ENCODE measurements at regions of chr16 and their contacts with region 1.

Region 1: DNA sequence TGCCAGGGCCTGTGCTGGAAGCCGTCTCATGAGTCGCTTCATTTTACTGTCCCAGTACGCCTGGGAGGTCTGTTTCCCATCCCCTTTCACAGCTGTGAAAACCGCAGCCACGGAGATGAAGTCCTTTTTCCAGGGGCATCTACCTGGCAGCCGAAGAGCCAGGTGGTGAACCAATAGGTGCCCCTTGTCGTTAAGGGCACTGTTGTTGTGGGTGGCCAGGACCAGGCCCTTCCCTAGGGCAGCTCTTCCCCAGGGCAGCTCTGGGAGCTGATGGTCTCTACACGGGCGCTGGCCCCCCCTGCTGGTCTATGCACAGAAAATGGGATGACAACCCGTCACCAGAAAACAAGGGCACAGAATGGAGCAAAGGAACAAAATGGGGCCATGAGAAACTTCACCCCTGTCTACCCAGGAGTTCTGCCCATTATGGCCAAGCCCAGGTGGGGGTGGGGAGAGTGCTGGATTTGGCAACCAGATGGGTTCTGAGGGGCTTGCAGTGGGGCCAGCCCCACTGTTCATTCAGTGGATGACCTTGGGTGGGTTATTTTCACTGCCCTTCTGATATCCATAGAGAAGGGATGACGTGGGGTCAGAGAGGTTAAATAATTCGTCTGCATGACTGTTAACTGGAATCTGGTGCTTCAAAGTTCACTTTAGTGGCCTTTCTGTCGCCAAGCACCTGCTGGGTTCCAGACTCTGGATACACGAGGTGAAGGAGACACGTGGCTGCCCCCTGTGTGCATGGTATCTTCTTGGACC is 11.5 kb downstream of the RMI2 start:
- DNase-seq: peak; percentile 79
- ATAC-seq: no peak
- H3K4me3 Mint-ChIP-seq: peak overlapping the region; percentile 46
- H3K27ac Mint-ChIP-seq: peak overlapping the region; percentile 23
- H3K4me1 Mint-ChIP-seq: peaks cover 67% of the 10 kb centered on the region
- H3K27me3 Mint-ChIP-seq: peaks cover 7% of the 10 kb centered on the region

Region 2: GRCh38 chr16:10957771-10958486 is 398.8 kb before region 1 on chr16:
- CTCF ChIA-PET with region 1: interaction called, 18 read pairs
- POLR2A ChIA-PET with region 1: no interaction called
- intact Hi-C with region 1: loop called in 1 of 2 experiments (anchors 2 kb)
- DNase-seq: peak; percentile 51
- ATAC-seq: peak; percentile 82
- H3K4me3 Mint-ChIP-seq: no peak overlapping the region
- H3K27ac Mint-ChIP-seq: peak overlapping the region; percentile 88
- H3K4me1 Mint-ChIP-seq: peaks cover 68% of the 10 kb centered on the region
- H3K27me3 Mint-ChIP-seq: no peaks in the 10 kb centered on the region

Region 3: GRCh38 chr16:11232852-11233726 is 123.7 kb before region 1 on chr16:
- CTCF ChIA-PET with region 1: no interaction called
- POLR2A ChIA-PET with region 1: no interaction called
- intact Hi-C with region 1: loop called in 1 of 2 experiments (anchors 1 kb)
- DNase-seq: peak; percentile 96
- ATAC-seq: peak; percentile 82
- H3K4me3 Mint-ChIP-seq: peak overlapping the region; percentile 60
- H3K27ac Mint-ChIP-seq: peak overlapping the region; percentile 97
- H3K4me1 Mint-ChIP-seq: peaks cover 80% of the 10 kb centered on the region
- H3K27me3 Mint-ChIP-seq: no peaks in the 10 kb centered on the region

Region 4: GRCh38 chr16:11297492-11298142 is 59.1 kb before region 1 on chr16:
- CTCF ChIA-PET with region 1: interaction called, 5 read pairs
- POLR2A ChIA-PET with region 1: interaction called, 4 read pairs
- intact Hi-C with region 1: loop called in 1 of 2 experiments (anchors 5 kb)
- DNase-seq: peak; percentile 84
- ATAC-seq: peak; percentile 81
- H3K4me3 Mint-ChIP-seq: peak overlapping the region; percentile 59
- H3K27ac Mint-ChIP-seq: peak overlapping the region; percentile 78
- H3K4me1 Mint-ChIP-seq: peaks cover 28% of the 10 kb centered on the region
- H3K27me3 Mint-ChIP-seq: no peaks in the 10 kb centered on the region

Region 5: DNA sequence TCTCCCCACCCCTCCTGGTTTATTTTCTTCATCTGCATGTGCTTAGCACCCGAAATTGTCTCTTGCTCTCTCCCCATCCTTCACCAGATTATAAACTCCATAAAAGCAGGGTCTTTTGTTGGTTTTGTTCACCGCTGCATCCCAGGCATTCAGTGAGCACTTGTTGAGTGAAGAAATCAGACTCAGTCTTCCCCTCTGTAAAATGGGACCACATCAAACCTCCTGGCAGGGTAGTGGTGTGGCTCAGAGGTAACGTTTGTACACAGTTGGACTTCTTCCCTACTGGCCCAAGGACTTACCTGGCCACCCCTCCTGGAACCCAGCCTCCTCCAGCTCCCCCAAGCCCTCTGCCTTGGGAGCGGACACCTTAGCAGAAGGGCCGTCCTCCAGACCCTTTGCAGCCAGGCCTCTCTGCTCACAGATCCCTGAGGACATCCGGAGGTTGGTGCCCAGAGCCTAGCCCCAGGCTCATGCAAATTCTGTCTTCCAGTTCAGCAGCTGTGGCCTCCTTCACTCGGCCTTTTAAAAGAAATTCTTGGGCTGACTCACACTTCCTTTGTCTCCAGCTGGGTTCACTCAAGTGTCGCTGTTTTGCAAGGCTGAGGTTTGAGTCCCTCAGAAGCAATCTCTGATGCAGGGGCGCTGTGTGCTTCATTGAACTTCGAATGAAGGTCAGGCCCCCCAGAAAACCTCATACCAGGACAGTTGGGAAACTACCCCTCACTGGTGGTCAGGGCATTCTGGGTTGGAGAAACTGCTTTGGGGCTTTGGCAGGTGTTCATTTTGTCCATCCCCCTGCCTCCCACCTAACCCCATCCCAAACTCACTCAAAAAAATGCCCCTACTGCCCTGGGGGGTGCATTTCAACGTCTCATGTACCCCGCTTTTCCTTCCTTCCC is 28.3 kb before region 1 on chr16:
- CTCF ChIA-PET with region 1: interaction called, 4 read pairs
- POLR2A ChIA-PET with region 1: no interaction called
- intact Hi-C with region 1: loop called (anchors 1 to 2 kb)
- DNase-seq: peak; percentile 73
- ATAC-seq: peak; percentile 81
- H3K4me3 Mint-ChIP-seq: peak overlapping the region; percentile 37
- H3K27ac Mint-ChIP-seq: peak overlapping the region; percentile 64
- H3K4me1 Mint-ChIP-seq: peaks cover 51% of the 10 kb centered on the region
- H3K27me3 Mint-ChIP-seq: no peaks in the 10 kb centered on the region